PC-3 (cell line): ENCODE measurements at regions of chr7 and their contacts with region 1.

Region 1: DNA sequence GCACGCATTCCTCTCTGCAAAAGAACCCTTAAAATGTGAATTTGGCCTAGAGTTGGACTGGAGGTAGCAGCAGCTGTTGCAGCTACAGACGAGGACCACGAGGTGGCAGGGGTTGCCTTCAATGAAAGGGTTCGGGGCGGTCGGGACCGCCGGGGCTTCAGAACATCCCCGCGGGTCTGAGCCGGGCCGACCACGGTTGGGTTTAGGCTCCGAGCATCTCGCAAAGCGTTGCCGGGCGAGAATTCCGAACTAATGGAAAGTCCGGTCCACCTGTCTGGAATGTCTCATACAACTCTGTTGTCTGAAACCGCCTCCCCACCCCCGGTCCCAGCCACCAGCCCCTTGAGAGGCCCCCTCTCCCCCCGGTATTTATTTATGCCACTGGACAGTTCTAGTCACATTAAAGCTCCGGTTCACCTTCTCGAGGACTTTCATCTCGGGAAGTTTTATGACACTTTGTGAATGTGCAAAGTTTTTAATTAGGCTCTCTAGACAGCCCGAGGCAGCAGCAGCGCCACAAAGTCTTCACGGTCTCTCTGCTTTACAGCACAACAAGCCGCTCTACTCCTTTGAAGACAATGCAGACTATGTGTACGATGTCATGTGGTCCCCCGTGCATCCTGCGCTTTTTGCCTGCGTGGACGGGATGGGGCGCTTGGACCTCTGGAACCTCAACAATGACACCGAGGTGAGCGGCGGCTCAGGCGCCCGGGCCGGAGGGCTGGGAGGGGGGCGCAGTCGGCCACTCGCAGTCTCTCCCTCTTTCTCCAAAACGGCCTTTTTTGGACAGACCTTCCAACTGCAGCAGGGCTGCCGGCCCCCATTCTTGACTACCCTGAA is 246.2 kb downstream of the SLC25A13 start:
- DNase-seq: peak; percentile 71
- ATAC-seq: peak; percentile 85
- H3K4me3 ChIP-seq: peak overlapping the region; percentile 73
- H3K27ac ChIP-seq: no peak overlapping the region
- H3K4me1 ChIP-seq: peaks cover 17% of the 10 kb centered on the region
- H3K27me3 ChIP-seq: no peaks in the 10 kb centered on the region
- CTCF ChIP-seq: peak; percentile 90

Region 2: GRCh38 chr7:96034940-96035727 is 40.6 kb before region 1 on chr7:
- CTCF ChIA-PET with region 1: no interaction called
- POLR2A ChIA-PET with region 1: no interaction called
- intact Hi-C with region 1: no loop called
- DNase-seq: no peak
- ATAC-seq: no peak
- H3K4me3 ChIP-seq: no peak overlapping the region
- H3K27ac ChIP-seq: no peak overlapping the region
- H3K4me1 ChIP-seq: no peaks in the 10 kb centered on the region
- H3K27me3 ChIP-seq: no peaks in the 10 kb centered on the region
- CTCF ChIP-seq: no peak

Region 3: GRCh38 chr7:96118449-96119001 is 42.8 kb after region 1 on chr7:
- CTCF ChIA-PET with region 1: no interaction called
- POLR2A ChIA-PET with region 1: no interaction called
- intact Hi-C with region 1: loop called (anchors 5 kb)
- DNase-seq: no peak
- ATAC-seq: no peak
- H3K4me3 ChIP-seq: no peak overlapping the region
- H3K27ac ChIP-seq: no peak overlapping the region
- H3K4me1 ChIP-seq: no peaks in the 10 kb centered on the region
- H3K27me3 ChIP-seq: no peaks in the 10 kb centered on the region
- CTCF ChIP-seq: no peak

Region 4: GRCh38 chr7:96179837-96180236 is 104.1 kb after region 1 on chr7:
- CTCF ChIA-PET with region 1: no interaction called
- POLR2A ChIA-PET with region 1: no interaction called
- intact Hi-C with region 1: loop called (anchors 2 kb)
- DNase-seq: peak; percentile 8
- ATAC-seq: peak; percentile 59
- H3K4me3 ChIP-seq: no peak overlapping the region
- H3K27ac ChIP-seq: no peak overlapping the region
- H3K4me1 ChIP-seq: peaks cover 11% of the 10 kb centered on the region; the same call in 1 of the 2 replicates
- H3K27me3 ChIP-seq: no peaks in the 10 kb centered on the region
- CTCF ChIP-seq: peak; percentile 42; the same call in 1 of the 2 replicates

Region 5: DNA sequence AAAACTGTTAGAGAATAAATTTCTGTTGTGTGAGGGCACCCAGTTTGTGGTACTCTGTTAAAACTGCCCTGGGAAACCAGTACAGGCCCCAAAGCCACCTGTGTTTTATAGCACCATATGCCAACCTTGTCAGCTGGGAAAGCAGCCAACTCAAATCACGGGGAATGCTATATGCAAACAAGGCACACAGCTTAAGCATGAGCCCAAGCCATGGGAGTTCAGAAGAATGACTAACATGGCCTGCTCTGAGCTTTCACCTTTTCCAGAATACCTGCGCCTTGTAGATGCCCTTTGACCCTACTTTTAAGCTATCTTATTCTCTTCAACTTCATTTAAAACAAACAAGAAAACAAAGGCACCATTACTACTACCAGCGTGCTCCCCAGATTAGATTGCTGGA is 251.7 kb after region 1 on chr7:
- CTCF ChIA-PET with region 1: no interaction called
- POLR2A ChIA-PET with region 1: no interaction called
- intact Hi-C with region 1: loop called (anchors 5 kb)
- DNase-seq: peak; percentile 89
- ATAC-seq: peak; percentile 75
- H3K4me3 ChIP-seq: peak overlapping the region; percentile 24; the same call in 1 of the 2 replicates
- H3K27ac ChIP-seq: peak overlapping the region; percentile 98
- H3K4me1 ChIP-seq: peaks cover 36% of the 10 kb centered on the region
- H3K27me3 ChIP-seq: no peaks in the 10 kb centered on the region
- CTCF ChIP-seq: no peak

Region 6: GRCh38 chr7:96337519-96337918 is 261.8 kb after region 1 on chr7:
- CTCF ChIA-PET with region 1: no interaction called
- POLR2A ChIA-PET with region 1: no interaction called
- intact Hi-C with region 1: no loop called
- DNase-seq: no peak
- ATAC-seq: no peak
- H3K4me3 ChIP-seq: no peak overlapping the region
- H3K27ac ChIP-seq: no peak overlapping the region
- H3K4me1 ChIP-seq: no peaks in the 10 kb centered on the region
- H3K27me3 ChIP-seq: no peaks in the 10 kb centered on the region
- CTCF ChIP-seq: no peak

Region 7: GRCh38 chr7:96709381-96710228 is 633.9 kb after region 1 on chr7 and contains the start of gene SEM1:
- CTCF ChIA-PET with region 1: no interaction called
- POLR2A ChIA-PET with region 1: no interaction called
- intact Hi-C with region 1: loop called (anchors 10 kb)
- DNase-seq: peak; percentile 81
- ATAC-seq: peak; percentile 96
- H3K4me3 ChIP-seq: peak within 1 kb of the TSS; percentile 92
- H3K27ac ChIP-seq: peak within 1 kb of the TSS; percentile 74
- H3K4me1 ChIP-seq: peaks cover 17% of the 10 kb centered on the region
- H3K27me3 ChIP-seq: no peaks in the 10 kb centered on the region
- CTCF ChIP-seq: no peak
- total RNA-seq, gene SEM1: 263 and 292 TPM in 2 replicates